SK-N-SH (cell line): ENCODE measurements at regions of chr1 and their contacts with region 1.

Region 1: DNA sequence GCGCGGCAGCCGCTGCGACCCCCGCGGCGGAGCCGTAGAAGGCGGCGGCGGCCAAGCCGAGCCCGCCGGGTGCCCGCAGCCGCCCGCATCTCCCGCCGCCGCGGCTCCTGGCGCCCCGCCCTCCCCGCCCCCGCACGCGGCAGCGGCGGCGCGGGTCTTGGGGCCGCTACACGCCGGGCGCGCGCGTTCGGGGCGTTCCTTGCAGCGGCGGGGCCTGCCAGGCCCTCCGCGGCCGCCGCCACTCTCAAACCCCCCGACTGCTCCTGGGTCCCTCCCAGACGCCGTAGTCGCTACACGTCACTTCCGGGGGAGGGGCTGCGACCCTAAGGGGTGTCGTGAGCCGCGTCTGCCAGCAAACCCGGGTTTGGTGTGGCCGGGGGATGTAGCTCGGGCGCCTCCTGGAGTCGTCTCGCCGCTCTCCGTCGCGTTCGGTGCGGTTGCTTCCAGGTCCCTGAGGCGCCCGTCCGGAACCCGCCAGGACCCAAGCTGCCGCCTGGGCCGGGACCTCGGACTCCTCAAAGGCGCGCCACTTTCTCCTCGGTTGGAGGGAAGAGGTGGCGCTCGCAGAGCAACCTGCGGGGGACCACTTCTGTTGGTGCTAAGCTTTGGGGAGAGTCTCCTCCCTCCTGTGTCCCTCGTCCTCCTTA is at the start of gene ELK4:
- DNase-seq: peak; percentile 98
- H3K4me3 ChIP-seq: peak within 1 kb of the TSS; percentile 77 to 83
- H3K27ac ChIP-seq: peak within 1 kb of the TSS; percentile 95
- H3K4me1 ChIP-seq: peaks cover 0 to 9% of the 10 kb centered on the region in 2 experiments; a peak in 2 of 4 replicates
- H3K27me3 ChIP-seq: no peaks in the 10 kb centered on the region
- CTCF ChIP-seq: peak; percentile 73
- EP300 ChIP-seq: peak in 1 of 2 experiments; percentile 36; a peak in 1 of 4 replicates
- RAD21 ChIP-seq: peak; percentile 77
- polyA plus RNA-seq, gene ELK4: 2.6 and 3.8 TPM in 2 replicates

Region 2: DNA sequence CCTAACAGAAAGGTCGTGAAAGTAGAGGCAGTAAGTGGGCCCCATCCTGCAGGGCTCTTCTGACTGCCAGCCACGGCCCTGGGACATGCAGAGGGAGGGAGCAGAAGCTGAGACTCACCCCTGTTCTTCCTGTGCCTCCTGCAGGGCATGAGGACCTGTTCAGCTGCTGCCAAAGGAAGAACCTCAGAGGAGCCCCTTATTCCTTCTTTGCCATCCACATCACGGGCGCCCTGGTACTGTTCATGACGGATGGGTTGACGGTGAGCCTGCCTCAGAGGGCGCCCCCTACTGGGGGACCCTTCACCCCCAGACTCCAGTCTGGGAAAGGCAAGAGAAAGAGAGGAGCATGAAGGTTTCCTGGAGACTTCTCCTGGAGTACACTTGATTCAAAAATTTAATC is 47.1 kb before region 1 on chr1:
- CTCF ChIA-PET with region 1: interaction called, 13 read pairs
- POLR2A ChIA-PET with region 1: no interaction called
- DNase-seq: no peak
- H3K4me3 ChIP-seq: no peak overlapping the region
- H3K27ac ChIP-seq: no peak overlapping the region
- H3K4me1 ChIP-seq: peaks cover 0 to 14% of the 10 kb centered on the region in 2 experiments; a peak in 2 of 4 replicates
- H3K27me3 ChIP-seq: no peaks in the 10 kb centered on the region; the same call in 1 of the 2 replicates
- CTCF ChIP-seq: peak; percentile 56
- EP300 ChIP-seq: no peak
- RAD21 ChIP-seq: no peak

Region 3: GRCh38 chr1:205645519-205645918 is 13.7 kb after region 1 on chr1:
- CTCF ChIA-PET with region 1: interaction called, 18 read pairs
- POLR2A ChIA-PET with region 1: interaction called, 3 read pairs
- DNase-seq: no peak
- H3K4me3 ChIP-seq: no peak overlapping the region
- H3K27ac ChIP-seq: no peak overlapping the region
- H3K4me1 ChIP-seq: no peaks in the 10 kb centered on the region; a peak in 1 of 4 replicates
- H3K27me3 ChIP-seq: no peaks in the 10 kb centered on the region
- CTCF ChIP-seq: no peak
- EP300 ChIP-seq: no peak
- RAD21 ChIP-seq: no peak